CD4-positive, alpha-beta memory T cell (primary cell): ENCODE measurements at regions of chr11 and their contacts with region 1.

Region 1: DNA sequence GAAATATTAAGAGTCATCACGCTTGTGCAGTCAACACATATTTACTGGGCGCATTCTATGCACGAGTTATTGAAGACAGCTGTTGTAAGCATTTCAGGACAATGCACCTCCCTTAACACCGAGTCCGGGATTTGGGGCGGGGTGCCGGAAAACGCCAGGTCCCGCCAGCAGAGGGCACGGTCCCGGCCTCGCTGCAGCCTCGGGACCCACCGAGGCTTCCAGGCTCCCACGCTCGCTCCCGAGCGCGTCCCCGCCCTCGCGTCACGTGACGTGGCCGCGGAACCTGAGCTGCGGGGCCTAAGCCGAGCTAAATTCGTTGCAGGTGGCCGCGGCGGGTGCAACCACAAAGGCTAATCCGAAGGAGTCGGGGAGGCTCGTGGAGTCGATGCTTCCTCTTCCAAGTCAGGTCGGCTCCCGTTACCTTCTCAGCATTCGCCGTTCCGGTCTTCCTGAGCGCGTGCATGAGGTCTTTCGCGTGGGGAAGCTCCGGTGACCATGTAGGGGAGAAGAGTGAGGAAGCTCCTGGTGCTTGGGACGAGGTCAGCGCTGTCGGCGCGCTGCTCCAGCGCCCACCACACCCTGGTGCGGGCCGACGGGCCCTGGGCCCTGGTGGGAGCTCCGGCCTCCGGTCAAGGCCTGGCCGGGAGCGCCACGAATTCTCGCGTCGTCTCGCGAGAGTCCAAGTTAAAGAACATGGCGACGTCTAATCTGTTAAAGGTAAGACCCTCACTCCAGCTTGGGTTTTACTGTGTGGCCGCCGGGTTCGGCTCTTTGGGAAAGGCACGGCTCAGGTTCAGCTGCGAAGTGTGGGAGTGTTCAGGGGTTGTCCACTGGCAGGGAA is at the start of gene CUL5:
- DNase-seq: peak; percentile 87 to 91 (median 89)
- H3K4me3 ChIP-seq: peak within 1 kb of the TSS; percentile 98 to 100
- H3K4me3 Mint-ChIP-seq: peak within 1 kb of the TSS; percentile 94 to 100 (median 99)
- H3K27ac ChIP-seq: peak within 1 kb of the TSS; percentile 96
- H3K27ac Mint-ChIP-seq: peak within 1 kb of the TSS; percentile 92 to 98 (median 97)
- H3K4me1 ChIP-seq: peaks cover 48% of the 10 kb centered on the region
- H3K4me1 Mint-ChIP-seq: peaks cover 0 to 18% (median 14%) of the 10 kb centered on the region in 4 donors
- H3K27me3 ChIP-seq: no peaks in the 10 kb centered on the region
- H3K27me3 Mint-ChIP-seq: no peaks in the 10 kb centered on the region
- total RNA-seq, gene CUL5: 37.3 to 38.9 TPM

Region 2: DNA sequence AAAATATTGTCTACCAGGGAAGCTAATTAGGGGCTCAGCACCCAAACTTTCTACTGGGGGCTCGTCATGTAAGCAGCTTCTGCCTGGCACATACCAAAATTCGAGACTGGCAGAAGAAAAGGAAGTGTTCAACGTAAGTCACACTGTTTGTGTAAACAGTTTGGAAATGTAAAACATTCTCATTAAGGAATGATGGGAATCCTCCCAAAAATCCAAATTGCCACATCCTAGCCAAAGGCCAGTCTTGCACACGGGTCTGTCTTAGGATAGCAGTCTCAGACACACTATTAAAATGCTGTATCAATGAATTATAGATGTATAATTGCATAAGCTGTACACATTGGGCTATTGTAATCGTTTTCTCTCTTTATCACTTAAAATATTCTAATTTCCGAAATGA is 28.8 kb after region 1 on chr11:
- CTCF ChIA-PET with region 1: interaction called, 13 read pairs
- POLR2A ChIA-PET with region 1: no interaction called
- intact Hi-C with region 1: no loop called
- DNase-seq: no peak
- H3K4me3 ChIP-seq: no peak overlapping the region
- H3K4me3 Mint-ChIP-seq: no peak overlapping the region
- H3K27ac ChIP-seq: no peak overlapping the region
- H3K27ac Mint-ChIP-seq: no peak overlapping the region
- H3K4me1 ChIP-seq: no peaks in the 10 kb centered on the region
- H3K4me1 Mint-ChIP-seq: peaks cover 0 to 12% (median 5%) of the 10 kb centered on the region in 4 donors
- H3K27me3 ChIP-seq: no peaks in the 10 kb centered on the region
- H3K27me3 Mint-ChIP-seq: no peaks in the 10 kb centered on the region

Region 3: DNA sequence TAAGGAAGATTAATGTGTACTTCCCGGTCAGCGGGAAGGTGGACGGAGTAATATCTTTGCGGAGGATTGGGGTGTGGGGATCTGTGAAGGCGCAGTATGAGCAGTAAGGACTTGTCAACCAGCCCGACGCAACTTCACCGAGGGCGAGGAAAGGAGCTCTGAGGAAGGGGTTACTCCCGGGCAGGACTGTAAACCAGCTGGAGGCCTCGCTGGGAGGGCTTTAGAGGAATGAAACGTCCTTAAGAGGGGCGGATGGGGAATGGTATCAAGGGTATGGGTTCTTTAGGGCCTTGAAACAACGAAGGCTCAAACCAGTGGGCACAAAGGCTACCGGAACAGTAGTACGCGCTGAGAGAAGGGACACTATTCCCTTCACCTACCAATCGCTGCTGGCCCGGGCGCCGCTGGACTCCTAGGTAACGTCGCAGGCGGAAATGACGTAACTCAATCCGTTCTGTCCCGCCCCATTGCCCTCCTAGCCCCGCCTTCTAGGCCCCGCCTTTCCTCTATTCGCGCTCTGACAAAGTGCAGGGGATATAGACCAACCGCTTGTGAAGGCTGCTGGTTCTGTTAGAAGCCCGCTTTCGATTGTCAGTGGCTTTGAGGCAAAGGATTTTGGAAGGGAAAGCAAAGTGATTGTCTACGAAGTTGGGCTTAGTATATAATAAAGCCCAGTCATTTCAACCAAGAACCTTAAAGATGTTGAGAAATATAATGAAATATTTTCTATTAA is 458.4 kb after region 1 on chr11 and contains the start of gene C11orf65:
- CTCF ChIA-PET with region 1: no interaction called
- POLR2A ChIA-PET with region 1: interaction called, 4 read pairs
- intact Hi-C with region 1: loop called (anchors 1 kb)
- DNase-seq: peak; percentile 96 to 97 (median 97)
- H3K4me3 ChIP-seq: peak within 1 kb of the TSS; percentile 40 to 94
- H3K4me3 Mint-ChIP-seq: peak within 1 kb of the TSS; percentile 96 to 100 (median 97)
- H3K27ac ChIP-seq: peak within 1 kb of the TSS; percentile 95
- H3K27ac Mint-ChIP-seq: peak within 1 kb of the TSS; percentile 97 to 100 (median 100)
- H3K4me1 ChIP-seq: peaks cover 8% of the 10 kb centered on the region
- H3K4me1 Mint-ChIP-seq: peaks cover 5 to 16% (median 9%) of the 10 kb centered on the region in 4 donors
- H3K27me3 ChIP-seq: no peaks in the 10 kb centered on the region
- H3K27me3 Mint-ChIP-seq: no peaks in the 10 kb centered on the region
- total RNA-seq, gene C11orf65: 0.30 to 0.93 TPM

Region 4: DNA sequence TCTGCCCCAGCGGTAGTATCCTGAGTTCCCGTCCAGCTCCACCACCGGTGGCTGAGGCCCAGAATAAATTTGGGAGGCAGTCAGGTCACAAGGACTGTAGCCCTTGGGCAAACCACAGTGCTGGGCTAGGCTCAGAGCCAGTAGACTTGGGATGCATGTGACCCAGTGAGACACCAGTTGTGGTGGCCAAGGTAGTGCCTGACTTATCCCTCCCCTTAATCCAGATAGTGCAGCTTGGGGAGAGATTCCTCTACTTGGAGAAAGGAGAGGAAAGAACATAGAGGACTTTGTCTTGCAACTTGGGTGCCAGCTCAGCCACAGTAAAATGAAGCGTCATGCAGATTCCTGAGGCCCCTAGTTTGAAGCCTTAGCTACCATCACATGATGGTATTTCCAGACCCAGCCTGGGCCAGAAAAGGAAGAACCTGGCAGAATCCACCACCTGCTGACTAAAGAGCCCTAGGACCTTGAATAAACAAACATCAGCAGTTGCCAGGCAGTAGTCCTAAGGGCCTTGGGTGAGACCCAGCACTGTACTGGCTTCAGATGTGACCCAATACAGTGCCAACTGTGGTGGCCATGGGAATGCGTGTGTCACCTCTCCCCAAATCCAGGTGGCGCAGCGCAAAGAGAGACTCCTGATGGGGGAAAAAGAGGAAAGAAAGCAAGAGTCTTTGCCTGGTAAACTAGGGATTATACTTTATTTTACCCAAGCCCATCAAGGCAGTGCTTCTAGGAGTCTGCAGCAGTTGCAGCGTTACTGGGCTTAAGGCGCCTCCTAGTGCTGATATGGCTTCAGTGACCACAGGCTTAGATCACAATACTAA is 639.0 kb after region 1 on chr11:
- CTCF ChIA-PET with region 1: interaction called, 3 read pairs
- POLR2A ChIA-PET with region 1: interaction called, 3 read pairs
- intact Hi-C with region 1: loop called (anchors 1 kb)
- DNase-seq: peak; percentile 58 to 65 (median 63)
- H3K4me3 ChIP-seq: no peak overlapping the region
- H3K4me3 Mint-ChIP-seq: no peak overlapping the region
- H3K27ac ChIP-seq: no peak overlapping the region
- H3K27ac Mint-ChIP-seq: no peak overlapping the region
- H3K4me1 ChIP-seq: no peaks in the 10 kb centered on the region
- H3K4me1 Mint-ChIP-seq: no peaks in the 10 kb centered on the region
- H3K27me3 ChIP-seq: no peaks in the 10 kb centered on the region
- H3K27me3 Mint-ChIP-seq: peaks cover 1 to 2% of the 10 kb centered on the region in 2 donors